ENCODE measurements at regions of chr11 and their contacts with region 1.

Region 1: DNA sequence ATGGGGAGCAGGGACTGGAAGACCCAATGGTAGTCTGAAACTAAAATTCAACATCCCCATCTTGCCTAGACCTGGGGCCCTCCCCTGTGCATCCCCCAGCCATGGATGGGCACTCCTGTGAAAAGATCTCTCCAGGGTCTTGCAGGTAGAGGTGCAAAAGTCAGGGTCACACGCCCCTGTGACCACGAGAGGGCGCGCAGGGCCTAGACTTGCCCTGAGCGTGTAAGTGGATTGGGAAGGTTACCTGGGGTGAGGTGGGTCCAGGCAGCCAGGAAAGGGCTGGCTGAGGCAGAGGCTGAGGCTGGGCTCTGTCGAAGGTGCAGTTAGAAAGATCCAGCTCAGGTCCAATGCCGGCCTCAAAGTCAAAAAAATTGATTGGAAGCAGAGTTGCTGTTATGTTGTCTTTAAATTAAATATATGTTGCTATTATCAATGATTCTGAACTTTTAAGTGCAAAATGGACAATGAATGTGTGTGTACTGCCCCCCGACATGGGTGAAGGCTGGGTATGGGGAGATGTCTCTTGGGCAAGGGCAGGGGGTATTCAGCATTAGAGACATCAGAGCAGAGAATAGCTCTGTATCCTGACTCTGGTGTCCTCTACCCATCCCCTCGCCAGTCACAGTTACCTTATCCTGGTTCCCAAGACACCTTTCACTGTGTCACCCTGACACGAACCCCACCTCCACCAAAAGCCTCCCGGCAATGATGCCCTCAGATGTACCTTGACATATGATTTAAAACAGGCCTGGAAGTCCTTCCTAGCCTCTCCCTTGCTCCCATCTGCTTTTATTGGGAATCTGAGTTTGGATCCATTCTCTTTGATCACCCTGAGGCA is 4.7 kb upstream of the POU2F3 start:
- DNase-seq: peak; percentile 49
- H3K4me3 Mint-ChIP-seq: no peak overlapping the region
- H3K27ac Mint-ChIP-seq: no peak overlapping the region
- H3K4me1 Mint-ChIP-seq: peaks cover 19% of the 10 kb centered on the region
- H3K27me3 Mint-ChIP-seq: peaks cover 55% of the 10 kb centered on the region

Region 2: GRCh38 chr11:120182790-120183491 is 52.3 kb before region 1 on chr11:
- intact Hi-C with region 1: no loop called
- DNase-seq: no peak
- H3K4me3 Mint-ChIP-seq: no peak overlapping the region
- H3K27ac Mint-ChIP-seq: no peak overlapping the region
- H3K4me1 Mint-ChIP-seq: peaks cover 10% of the 10 kb centered on the region
- H3K27me3 Mint-ChIP-seq: peaks cover 10% of the 10 kb centered on the region

Region 3: GRCh38 chr11:120303004-120303637 is 67.9 kb after region 1 on chr11:
- intact Hi-C with region 1: loop called (anchors 1 kb)
- DNase-seq: peak; percentile 46
- H3K4me3 Mint-ChIP-seq: no peak overlapping the region
- H3K27ac Mint-ChIP-seq: peak overlapping the region; percentile 7
- H3K4me1 Mint-ChIP-seq: no peaks in the 10 kb centered on the region
- H3K27me3 Mint-ChIP-seq: peaks cover 26% of the 10 kb centered on the region

Measured in activated T-helper 1 cell treated with anti-CD3 and anti-CD28 coated beads, Interleukin-12 subunit alpha, Interleukin-12 subunit beta, Interleukin-2, Interleukin-4 antibody, amounts not matched to agents 30 ng/mL and 10 ng/mL and 1 ng/mL, durations not matched to agents 14 hours and 24 hours and 36 hours (primary cell).